ENCODE measurements at regions of chr3 and their contacts with region 1.

Region 1: GRCh38 chr3:50235716-50236496 is at the start of gene GNAI2:
- DNase-seq: peak; percentile 99
- ATAC-seq: peak; percentile 92
- H3K4me3 Mint-ChIP-seq: peak within 1 kb of the TSS; percentile 90
- H3K27ac Mint-ChIP-seq: peak within 1 kb of the TSS; percentile 96
- H3K4me1 Mint-ChIP-seq: peaks cover 31% of the 10 kb centered on the region
- H3K27me3 Mint-ChIP-seq: no peaks in the 10 kb centered on the region
- total RNA-seq, gene GNAI2: 280 to 341 TPM

Region 2: DNA sequence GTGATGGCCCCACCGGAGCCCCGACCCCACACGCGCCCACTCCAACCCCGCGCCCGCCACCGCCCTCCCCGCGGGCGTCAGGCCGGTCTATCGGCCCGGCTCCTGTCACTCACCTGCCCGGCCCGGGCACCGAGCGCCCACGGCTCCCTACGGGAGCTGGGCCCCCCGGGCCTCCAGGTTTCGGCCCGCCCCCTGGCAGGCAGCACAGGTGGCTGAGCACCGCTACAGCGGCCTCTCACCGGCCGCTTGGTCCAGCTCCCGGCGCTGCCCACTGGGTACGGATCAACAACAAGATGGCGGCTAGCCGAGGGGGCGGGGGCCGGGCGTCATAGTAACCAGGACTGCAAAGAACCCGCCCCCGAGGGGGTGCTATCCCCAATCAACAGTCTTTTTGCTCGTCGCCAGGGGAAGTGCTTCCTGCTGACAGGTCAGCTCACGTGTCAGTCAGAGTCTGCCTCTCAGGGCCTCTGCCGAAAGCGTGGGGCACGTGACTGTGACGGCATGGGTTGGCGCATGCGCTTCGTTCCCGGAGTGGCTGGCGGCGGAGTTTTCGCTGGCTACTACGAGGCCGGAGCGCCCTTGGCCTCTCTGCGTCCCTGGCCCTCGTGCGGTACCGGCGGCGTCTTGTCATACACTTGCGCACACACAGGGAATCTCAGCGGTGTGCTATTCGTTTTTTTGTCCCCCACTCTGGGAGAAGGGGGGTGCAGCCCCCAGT is 449.5 kb before region 1 on chr3 and contains the start of gene IP6K1:
- CTCF ChIA-PET with region 1: no interaction called
- POLR2A ChIA-PET with region 1: no interaction called
- intact Hi-C with region 1: loop called in 1 of 2 experiments (anchors 2 kb)
- DNase-seq: peak; percentile 100
- ATAC-seq: peak; percentile 100
- H3K4me3 Mint-ChIP-seq: peak within 1 kb of the TSS; percentile 90
- H3K27ac Mint-ChIP-seq: peak within 1 kb of the TSS; percentile 96
- H3K4me1 Mint-ChIP-seq: peaks cover 37% of the 10 kb centered on the region
- H3K27me3 Mint-ChIP-seq: no peaks in the 10 kb centered on the region
- total RNA-seq, gene IP6K1: 29.1 to 31.0 TPM

Region 3: GRCh38 chr3:50089609-50089945 is 146.3 kb before region 1 on chr3:
- CTCF ChIA-PET with region 1: no interaction called
- POLR2A ChIA-PET with region 1: no interaction called
- intact Hi-C with region 1: no loop called
- DNase-seq: no peak
- ATAC-seq: no peak
- H3K4me3 Mint-ChIP-seq: peak overlapping the region; percentile 99
- H3K27ac Mint-ChIP-seq: peak overlapping the region; percentile 97
- H3K4me1 Mint-ChIP-seq: peaks cover 28% of the 10 kb centered on the region
- H3K27me3 Mint-ChIP-seq: no peaks in the 10 kb centered on the region

Region 4: DNA sequence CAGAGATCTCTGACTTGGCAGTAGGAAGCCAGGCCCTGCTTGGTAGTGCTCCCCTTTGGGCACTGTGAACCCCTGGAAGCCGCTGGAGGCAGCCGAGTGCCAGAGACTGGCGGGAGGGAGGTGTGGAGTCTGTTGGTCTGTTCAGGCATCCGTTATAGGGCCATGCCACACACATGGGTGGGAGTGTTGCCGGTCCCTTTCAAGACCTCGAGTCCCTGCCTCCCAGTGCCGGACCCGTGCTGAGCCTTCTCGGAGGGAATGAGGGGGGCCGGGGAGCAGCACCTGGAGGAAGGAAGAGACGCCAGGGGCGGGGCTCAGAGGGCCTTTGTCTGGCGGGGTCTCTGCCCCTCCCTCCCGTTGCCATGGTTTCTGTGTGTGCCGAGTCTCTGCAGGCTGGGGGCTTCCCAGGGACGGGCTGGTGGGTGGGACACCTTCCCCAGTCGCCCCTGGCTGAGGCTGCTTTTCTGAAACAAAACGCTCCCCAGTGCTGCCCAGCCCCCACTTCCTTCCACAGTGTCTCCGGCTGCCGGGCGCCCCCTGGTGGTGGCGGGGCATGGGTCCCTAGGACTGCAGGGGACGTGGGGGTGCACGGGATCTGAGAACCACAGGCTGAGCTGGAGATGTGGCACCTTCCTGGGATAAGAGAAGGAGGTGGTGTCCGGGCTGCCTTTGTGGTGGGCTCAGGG is 10.1 kb after region 1 on chr3:
- CTCF ChIA-PET with region 1: interaction called, 76 read pairs
- POLR2A ChIA-PET with region 1: interaction called, 9 read pairs
- intact Hi-C with region 1: loop called (anchors 1 kb)
- DNase-seq: peak; percentile 98
- ATAC-seq: peak; percentile 76
- H3K4me3 Mint-ChIP-seq: peak overlapping the region; percentile 75
- H3K27ac Mint-ChIP-seq: peak overlapping the region; percentile 95
- H3K4me1 Mint-ChIP-seq: peaks cover 84% of the 10 kb centered on the region
- H3K27me3 Mint-ChIP-seq: no peaks in the 10 kb centered on the region

Region 5: GRCh38 chr3:50327943-50328691 is 92.2 kb after region 1 on chr3 and contains the start of gene TUSC2:
- CTCF ChIA-PET with region 1: interaction called, 6 read pairs
- POLR2A ChIA-PET with region 1: no interaction called
- intact Hi-C with region 1: loop called in 1 of 2 experiments (anchors 5 kb)
- DNase-seq: peak; percentile 98
- ATAC-seq: peak; percentile 95
- H3K4me3 Mint-ChIP-seq: peak within 1 kb of the TSS; percentile 83
- H3K27ac Mint-ChIP-seq: peak within 1 kb of the TSS; percentile 76
- H3K4me1 Mint-ChIP-seq: peaks cover 20% of the 10 kb centered on the region
- H3K27me3 Mint-ChIP-seq: no peaks in the 10 kb centered on the region
- total RNA-seq, gene TUSC2: 15.0 to 17.1 TPM

Region 6: DNA sequence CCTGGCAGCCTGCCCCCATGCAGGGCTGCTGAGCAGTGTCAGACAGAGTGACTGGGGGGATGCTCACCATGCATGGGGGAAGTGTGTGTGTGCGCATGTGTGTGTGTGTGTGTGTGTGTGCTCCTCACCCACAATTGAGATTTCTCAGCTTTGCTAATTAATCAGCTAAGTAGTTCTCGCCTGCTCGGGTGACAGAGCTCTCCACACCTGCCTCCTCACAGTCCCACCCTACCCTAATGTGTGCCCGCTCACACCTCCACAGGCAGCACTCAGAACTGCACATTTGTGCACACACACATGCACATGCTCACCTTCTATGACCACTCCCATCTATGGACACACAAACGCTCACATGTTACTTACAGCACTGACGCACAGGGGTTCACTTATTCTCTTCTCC is 230.3 kb after region 1 on chr3:
- CTCF ChIA-PET with region 1: no interaction called
- POLR2A ChIA-PET with region 1: no interaction called
- intact Hi-C with region 1: no loop called
- DNase-seq: no peak
- ATAC-seq: no peak
- H3K4me3 Mint-ChIP-seq: no peak overlapping the region
- H3K27ac Mint-ChIP-seq: no peak overlapping the region
- H3K4me1 Mint-ChIP-seq: no peaks in the 10 kb centered on the region
- H3K27me3 Mint-ChIP-seq: no peaks in the 10 kb centered on the region

Region 7: GRCh38 chr3:51384726-51385473 is 1149.0 kb after region 1 on chr3 and contains the start of gene MANF:
- CTCF ChIA-PET with region 1: no interaction called
- POLR2A ChIA-PET with region 1: no interaction called
- intact Hi-C with region 1: loop called in 1 of 2 experiments (anchors 5 kb)
- DNase-seq: peak; percentile 99
- ATAC-seq: peak; percentile 97
- H3K4me3 Mint-ChIP-seq: peak within 1 kb of the TSS; percentile 93
- H3K27ac Mint-ChIP-seq: peak within 1 kb of the TSS; percentile 99
- H3K4me1 Mint-ChIP-seq: peaks cover 46% of the 10 kb centered on the region
- H3K27me3 Mint-ChIP-seq: no peaks in the 10 kb centered on the region
- total RNA-seq, gene MANF: 124 to 129 TPM

Measured in activated CD4-positive, alpha-beta T cell treated with anti-CD3 and anti-CD28 coated beads for 36 hours (primary cell).